Activated T-helper 1 cell treated with anti-CD3 and anti-CD28 coated beads, Interleukin-12 subunit alpha, Interleukin-12 subunit beta, Interleukin-2, Interleukin-4 antibody, amounts not matched to agents 30 ng/mL and 10 ng/mL and 1 ng/mL, durations not matched to agents 14 hours and 24 hours and 36 hours (primary cell): ENCODE measurements at regions of chr2 and their contacts with region 1.

Region 1: GRCh38 chr2:84495539-84496146 is 20.7 kb upstream of the DNAH6 start:
- DNase-seq: peak; percentile 16
- H3K4me3 Mint-ChIP-seq: no peak overlapping the region
- H3K27ac Mint-ChIP-seq: no peak overlapping the region
- H3K4me1 Mint-ChIP-seq: peaks cover 7% of the 10 kb centered on the region
- H3K27me3 Mint-ChIP-seq: no peaks in the 10 kb centered on the region

Region 2: DNA sequence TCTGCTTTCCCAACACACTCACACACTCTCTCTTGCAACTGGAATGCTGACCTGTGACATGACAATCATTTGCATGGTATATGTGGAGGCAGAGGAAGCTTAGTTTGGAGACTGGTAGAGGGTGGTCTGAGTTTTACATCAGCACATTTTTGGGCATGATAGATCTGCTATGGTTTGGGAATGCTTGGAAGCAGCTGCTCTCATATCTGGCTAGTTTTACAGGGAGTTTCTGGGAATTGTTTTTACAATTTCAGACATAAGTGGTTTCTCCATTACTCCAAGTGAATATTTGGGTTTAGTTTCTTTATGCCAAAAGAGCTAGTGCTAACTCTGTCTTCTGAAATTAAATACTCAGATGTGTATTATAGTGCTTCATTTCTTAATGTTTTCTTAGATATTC is 1014.2 kb before region 1 on chr2:
- intact Hi-C with region 1: no loop called
- DNase-seq: no peak
- H3K4me3 Mint-ChIP-seq: no peak overlapping the region
- H3K27ac Mint-ChIP-seq: no peak overlapping the region
- H3K4me1 Mint-ChIP-seq: no peaks in the 10 kb centered on the region
- H3K27me3 Mint-ChIP-seq: no peaks in the 10 kb centered on the region

Region 3: GRCh38 chr2:84388133-84388532 is 107.5 kb before region 1 on chr2:
- intact Hi-C with region 1: no loop called
- DNase-seq: no peak
- H3K4me3 Mint-ChIP-seq: no peak overlapping the region
- H3K27ac Mint-ChIP-seq: no peak overlapping the region
- H3K4me1 Mint-ChIP-seq: no peaks in the 10 kb centered on the region
- H3K27me3 Mint-ChIP-seq: peaks cover 24% of the 10 kb centered on the region

Region 4: DNA sequence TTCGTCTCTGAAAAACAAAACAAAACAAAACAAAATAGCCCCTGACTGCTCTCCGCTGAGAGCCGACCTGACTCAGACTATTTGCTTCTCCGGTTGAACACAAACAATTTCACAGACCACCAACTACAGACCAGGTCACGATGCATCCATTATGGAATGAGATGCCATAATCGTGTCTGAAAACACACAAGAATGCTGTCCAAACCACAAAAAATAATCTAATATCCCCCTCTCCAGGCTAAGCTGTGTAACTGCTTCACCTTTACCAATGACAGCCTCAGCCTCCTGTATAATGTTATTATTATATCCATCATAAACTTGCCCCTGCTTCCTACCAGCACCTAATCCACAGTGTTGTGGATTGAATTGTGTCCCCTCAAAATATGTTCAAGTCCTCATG is 135.4 kb after region 1 on chr2:
- intact Hi-C with region 1: loop called (anchors 1 kb)
- DNase-seq: no peak
- H3K4me3 Mint-ChIP-seq: no peak overlapping the region
- H3K27ac Mint-ChIP-seq: no peak overlapping the region
- H3K4me1 Mint-ChIP-seq: no peaks in the 10 kb centered on the region
- H3K27me3 Mint-ChIP-seq: peaks cover 3% of the 10 kb centered on the region